Lower leg skin (tissue), 4 donors: ENCODE measurements at regions of chr11 and their contacts with region 1.

Region 1: DNA sequence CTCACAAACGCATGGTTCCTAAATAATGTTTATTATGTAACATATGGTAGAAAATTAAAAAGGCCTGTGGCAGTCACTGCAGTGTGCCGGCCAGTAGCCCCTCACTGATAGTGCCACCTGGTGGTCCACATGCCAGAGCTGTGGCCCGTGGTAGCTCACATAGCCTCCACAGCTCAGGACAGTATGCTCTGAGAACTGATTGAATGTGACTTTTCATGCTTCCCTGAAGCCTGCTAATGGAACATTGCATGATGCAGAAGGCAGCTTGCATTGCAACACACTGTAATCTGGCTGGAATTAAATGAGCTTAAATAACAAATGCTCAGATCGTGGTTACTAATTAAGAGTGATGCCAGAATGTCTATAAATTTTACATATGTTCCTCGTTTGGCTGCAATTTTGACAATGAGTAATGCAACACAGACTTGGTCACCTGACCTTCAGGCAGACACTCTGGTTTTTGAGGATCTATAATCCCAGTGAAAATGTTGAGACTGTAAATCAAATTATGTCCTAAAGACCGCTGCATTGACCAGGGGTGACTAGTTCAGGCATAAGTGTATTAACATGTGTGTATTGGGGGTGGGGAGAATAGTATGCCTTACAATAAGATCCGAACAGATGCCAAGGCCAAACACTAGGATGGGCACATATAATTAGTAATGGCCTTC is 566.4 kb downstream of the METTL15 start:
- DNase-seq: no peak
- H3K4me3 ChIP-seq: no peak overlapping the region
- CTCF ChIP-seq: no peak
- POLR2A ChIP-seq: no peak

Region 2: DNA sequence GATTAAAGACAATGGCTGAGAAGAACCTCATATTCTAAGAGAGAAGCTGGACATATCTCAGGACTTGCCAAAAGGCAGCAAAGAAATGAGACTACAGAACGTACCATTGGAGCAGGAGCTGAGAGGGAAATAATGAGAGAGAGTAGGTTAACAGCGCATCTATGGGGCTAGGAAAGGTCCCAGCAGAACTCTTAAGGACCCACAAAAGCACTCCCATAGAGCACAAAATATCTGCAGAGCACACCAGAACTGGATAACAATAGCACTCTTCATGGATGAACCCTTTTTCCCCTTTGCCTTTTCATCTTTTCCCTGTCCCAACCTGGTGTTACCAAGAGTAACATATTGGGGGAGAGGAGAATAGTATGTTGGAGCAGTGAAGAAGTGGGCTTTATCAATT is 320.6 kb before region 1 on chr11:
- intact Hi-C with region 1: no loop called
- DNase-seq: no peak
- H3K4me3 ChIP-seq: no peak overlapping the region
- CTCF ChIP-seq: no peak
- POLR2A ChIP-seq: no peak

Region 3: GRCh38 chr11:28495333-28495732 is 179.2 kb before region 1 on chr11:
- intact Hi-C with region 1: no loop called
- DNase-seq: no peak
- H3K4me3 ChIP-seq: no peak overlapping the region
- CTCF ChIP-seq: no peak
- POLR2A ChIP-seq: no peak

Region 4: GRCh38 chr11:28606930-28607329 is 67.6 kb before region 1 on chr11:
- intact Hi-C with region 1: loop called (anchors 2 kb)
- DNase-seq: no peak
- H3K4me3 ChIP-seq: no peak overlapping the region
- CTCF ChIP-seq: no peak
- POLR2A ChIP-seq: no peak

Region 5: GRCh38 chr11:28777126-28777525 is 102.6 kb after region 1 on chr11:
- intact Hi-C with region 1: no loop called
- DNase-seq: no peak
- H3K4me3 ChIP-seq: no peak overlapping the region
- CTCF ChIP-seq: no peak
- POLR2A ChIP-seq: no peak